Heart right ventricle (tissue), 16 donors: ENCODE measurements at regions of chr1 and their contacts with region 1.

Region 1: GRCh38 chr1:54800899-54801759 is at the start of gene TTC22:
- DNase-seq: no peak
- ATAC-seq: peak in 6 of 8 donors; percentile 58 to 76 (median 66)
- H3K4me3 ChIP-seq: peak within 1 kb of the TSS in 9 of 10 donors; percentile 1 to 62 (median 35)
- H3K27ac ChIP-seq: peak within 1 kb of the TSS in 1 of 10 donors; percentile 74
- H3K4me1 ChIP-seq: peaks cover 0 to 39% (median 9%) of the 10 kb centered on the region in 9 donors
- H3K27me3 ChIP-seq: peaks cover 0 to 59% (median 34%) of the 10 kb centered on the region in 7 donors
- CTCF ChIP-seq: peak in 4 of 9 donors; percentile 28 to 37 (median 34)
- total RNA-seq, gene TTC22: 0.13 to 1.0 (median 0.17) TPM in 5 of 10 donors, not detected in the others

Region 2: DNA sequence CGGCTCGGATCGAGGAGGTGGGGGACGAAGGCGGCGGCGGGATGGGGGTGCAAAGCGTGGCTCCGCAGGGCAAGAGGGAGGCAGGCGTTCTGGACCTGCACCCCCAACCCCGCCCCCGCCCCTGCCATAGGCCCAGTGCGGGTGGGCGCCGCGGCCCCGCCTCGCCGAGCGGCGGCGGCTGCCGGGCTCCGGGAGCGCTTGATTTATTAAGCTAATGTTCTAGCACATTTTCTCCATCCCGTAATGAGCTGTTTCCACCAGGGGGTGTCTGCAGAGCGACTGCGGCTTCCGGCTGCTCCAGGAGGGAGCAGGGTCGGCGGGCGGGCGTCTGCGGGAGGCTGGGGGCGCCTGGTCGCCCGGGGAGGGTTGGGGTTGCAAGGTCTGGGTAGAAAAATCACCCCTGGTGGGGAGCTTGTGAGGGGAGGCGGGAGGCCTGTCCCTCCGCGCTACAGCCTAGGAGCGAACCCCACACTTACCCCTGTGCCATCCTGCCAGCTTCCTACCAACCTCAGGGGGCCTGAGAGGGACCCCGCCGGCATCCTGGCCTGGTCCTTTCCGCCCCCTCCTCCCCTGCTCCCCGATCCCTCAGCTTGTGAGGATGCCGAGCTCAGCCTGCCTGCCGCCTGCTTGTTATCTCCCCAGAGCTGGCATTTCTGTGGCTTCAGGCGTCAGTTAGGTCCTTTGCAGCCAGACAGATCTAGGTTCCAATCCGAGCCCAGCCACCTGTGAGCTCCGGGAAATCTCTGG is 301.6 kb before region 1 on chr1:
- intact Hi-C with region 1: loop called in 3 of 10 experiments (anchors 10 kb)
- DNase-seq: no peak
- ATAC-seq: peak; percentile 47 to 80 (median 66)
- H3K4me3 ChIP-seq: peak overlapping the region in 9 of 10 donors; percentile 24 to 52 (median 47)
- H3K27ac ChIP-seq: no peak overlapping the region
- H3K4me1 ChIP-seq: peaks cover 0 to 16% (median 13%) of the 10 kb centered on the region in 9 donors
- H3K27me3 ChIP-seq: peaks cover 0 to 63% (median 45%) of the 10 kb centered on the region in 7 donors
- CTCF ChIP-seq: peak in 6 of 9 donors; percentile 41 to 54 (median 46)

Region 3: DNA sequence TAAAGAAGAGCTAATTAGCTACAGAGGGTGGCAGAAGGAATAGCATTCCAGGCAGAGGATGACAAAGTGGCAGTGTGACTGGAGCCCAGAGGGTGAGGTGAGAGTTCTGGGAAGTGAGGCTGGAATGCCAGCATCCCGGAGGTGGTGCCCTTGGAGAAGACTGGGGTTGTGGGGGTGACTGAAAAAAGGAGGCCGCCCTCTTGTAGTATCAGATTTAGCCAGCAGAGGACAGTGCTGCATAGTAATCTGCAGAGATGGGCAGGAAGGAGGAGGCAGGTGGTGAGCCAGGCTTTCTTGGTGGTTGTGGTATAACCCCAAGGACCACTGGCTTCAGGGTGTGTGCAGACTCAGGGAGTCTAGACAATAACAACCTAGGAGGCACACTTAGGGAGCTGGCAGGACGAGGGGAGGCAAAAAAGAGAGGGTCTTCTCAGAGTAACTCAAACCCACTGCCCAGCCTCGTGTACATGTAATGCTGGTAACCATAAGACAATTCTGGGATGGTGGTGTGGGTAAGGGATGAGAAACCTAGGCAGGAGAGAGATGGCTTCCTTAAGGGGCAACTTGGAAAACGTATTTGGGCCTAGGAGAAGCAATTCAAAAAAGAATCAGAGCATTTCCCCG is 129.0 kb before region 1 on chr1:
- intact Hi-C with region 1: loop called in 1 of 10 experiments (anchors 10 kb)
- DNase-seq: no peak
- ATAC-seq: peak in 3 of 8 donors; percentile 12 to 51 (median 40)
- H3K4me3 ChIP-seq: no peak overlapping the region
- H3K27ac ChIP-seq: no peak overlapping the region
- H3K4me1 ChIP-seq: no peaks in the 10 kb centered on the region
- H3K27me3 ChIP-seq: no peaks in the 10 kb centered on the region
- CTCF ChIP-seq: peak in 7 of 9 donors; percentile 46 to 80 (median 53)